ENCODE measurements at regions of chr17 and their contacts with region 1.

Region 1: GRCh38 chr17:77086433-77087010 is 54.2 kb upstream of the SEC14L1 start:
- DNase-seq: peak; percentile 97
- H3K4me3 ChIP-seq: peak overlapping the region in 1 of 4 donors; percentile 7
- H3K27ac ChIP-seq: no peak overlapping the region
- H3K4me1 ChIP-seq: peaks cover 26 to 51% (median 42%) of the 10 kb centered on the region in 4 donors
- H3K27me3 ChIP-seq: peaks cover 0 to 29% (median 0%) of the 10 kb centered on the region in 4 donors
- CTCF ChIP-seq: peak; percentile 85 to 92 (median 92)
- EP300 ChIP-seq: no peak
- POLR2A ChIP-seq: no peak

Region 2: DNA sequence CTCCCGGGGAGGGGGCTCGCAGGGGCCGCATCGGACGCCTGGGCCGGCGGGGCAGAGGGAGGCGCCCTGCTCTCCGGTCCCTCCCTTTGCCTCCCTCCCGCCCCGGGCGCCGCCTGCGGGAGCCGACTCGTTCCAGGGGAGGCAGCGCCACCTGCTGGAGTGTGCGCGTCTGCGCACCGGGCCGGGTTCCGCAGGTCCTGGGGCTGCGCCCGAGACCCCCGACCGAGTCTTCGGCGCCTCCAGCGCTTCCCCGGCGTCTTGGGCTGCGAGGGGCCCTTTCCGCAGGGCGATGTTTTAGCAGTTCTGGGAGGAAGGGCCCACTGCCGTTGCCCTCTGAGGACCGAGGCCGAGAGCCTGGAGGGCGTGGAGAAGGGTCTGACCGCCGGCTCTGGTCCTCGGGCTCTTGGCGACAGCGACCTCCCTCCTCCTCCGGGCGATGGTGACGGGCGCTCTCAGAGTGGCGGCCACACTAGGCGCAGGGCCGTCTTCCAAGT is 160.6 kb after region 1 on chr17:
- intact Hi-C with region 1: loop called (anchors 1 kb)
- DNase-seq: peak; percentile 94
- H3K4me3 ChIP-seq: peak overlapping the region; percentile 66 to 70 (median 68)
- H3K27ac ChIP-seq: peak overlapping the region; percentile 53 to 71 (median 53)
- H3K4me1 ChIP-seq: peaks cover 10 to 17% (median 15%) of the 10 kb centered on the region in 4 donors
- H3K27me3 ChIP-seq: peaks cover 0 to 14% (median 0%) of the 10 kb centered on the region in 4 donors
- CTCF ChIP-seq: peak in 2 of 3 experiments; percentile 99
- EP300 ChIP-seq: no peak
- POLR2A ChIP-seq: no peak

Measured in esophagus muscularis mucosa (tissue), 4 donors.